Posterior cingulate gyrus (tissue), 11 donors: ENCODE measurements at regions of chr15 and their contacts with region 1.

Region 1: DNA sequence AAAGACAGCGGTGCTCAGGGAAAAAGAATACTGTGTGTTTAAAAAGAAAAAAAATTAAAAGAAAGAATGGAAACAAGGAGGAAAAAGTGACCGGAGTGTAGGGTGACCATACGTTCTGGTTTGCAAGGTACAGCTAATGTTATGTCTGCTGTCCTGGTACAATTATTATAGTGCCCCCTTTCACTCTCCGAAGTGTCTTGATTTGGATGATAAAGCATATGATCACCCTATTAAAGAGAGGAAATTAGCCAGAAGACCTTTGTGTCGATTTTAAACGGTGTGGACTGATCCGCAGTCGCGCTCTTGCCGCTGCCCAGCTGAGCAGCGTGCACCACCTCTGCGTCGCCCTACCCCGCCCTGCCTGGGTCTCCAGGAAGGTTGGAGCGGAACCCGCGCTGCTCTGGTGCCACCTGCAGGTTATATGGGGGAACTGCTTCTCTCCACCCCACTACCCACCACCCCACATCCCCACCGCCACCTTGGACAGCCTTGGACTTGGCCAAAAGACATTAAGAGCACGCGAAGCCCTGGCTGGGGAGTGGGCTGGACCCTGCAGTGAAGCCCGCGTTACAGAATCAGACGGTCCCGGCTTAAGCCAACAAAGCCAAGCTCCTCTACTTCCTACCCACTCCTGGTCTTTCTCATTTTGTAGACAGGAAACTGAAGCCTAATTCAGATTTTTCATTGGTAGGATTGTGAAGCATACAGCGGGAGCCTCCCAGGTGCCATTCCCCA is 41.2 kb upstream of the UBE2Q2 start:
- DNase-seq: peak; percentile 44 to 97 (median 76)

Region 2: GRCh38 chr15:75727851-75728715 is 73.9 kb before region 1 on chr15:
- intact Hi-C with region 1: loop called (anchors 2 kb)
- DNase-seq: peak; percentile 43 to 95 (median 70)